Heart right ventricle (tissue), 16 donors: ENCODE measurements at regions of chr15 and their contacts with region 1.

Region 1: GRCh38 chr15:91055548-91056331 is 33.3 kb upstream of the VPS33B start:
- DNase-seq: peak; percentile 15 to 54
- ATAC-seq: peak; percentile 65 to 90 (median 75)
- H3K4me3 ChIP-seq: no peak overlapping the region
- H3K27ac ChIP-seq: no peak overlapping the region
- H3K4me1 ChIP-seq: peaks cover 0 to 6% (median 0%) of the 10 kb centered on the region in 9 donors
- H3K27me3 ChIP-seq: peaks cover 0 to 59% (median 25%) of the 10 kb centered on the region in 7 donors
- CTCF ChIP-seq: peak; percentile 53 to 88 (median 77)

Region 2: GRCh38 chr15:91022075-91022835 is 33.5 kb before region 1 on chr15 and contains the start of gene VPS33B:
- intact Hi-C with region 1: no loop called
- DNase-seq: peak; percentile 76 to 90
- ATAC-seq: peak; percentile 90 to 97 (median 94)
- H3K4me3 ChIP-seq: peak within 1 kb of the TSS; percentile 53 to 96 (median 90)
- H3K27ac ChIP-seq: peak within 1 kb of the TSS in 9 of 10 donors; percentile 46 to 90 (median 78)
- H3K4me1 ChIP-seq: peaks cover 0 to 30% (median 23%) of the 10 kb centered on the region in 9 donors
- H3K27me3 ChIP-seq: no peaks in the 10 kb centered on the region
- CTCF ChIP-seq: peak in 2 of 9 donors; percentile 2 to 15
- total RNA-seq, gene VPS33B: 3.7 to 10.4 (median 5.5) TPM

Region 3: DNA sequence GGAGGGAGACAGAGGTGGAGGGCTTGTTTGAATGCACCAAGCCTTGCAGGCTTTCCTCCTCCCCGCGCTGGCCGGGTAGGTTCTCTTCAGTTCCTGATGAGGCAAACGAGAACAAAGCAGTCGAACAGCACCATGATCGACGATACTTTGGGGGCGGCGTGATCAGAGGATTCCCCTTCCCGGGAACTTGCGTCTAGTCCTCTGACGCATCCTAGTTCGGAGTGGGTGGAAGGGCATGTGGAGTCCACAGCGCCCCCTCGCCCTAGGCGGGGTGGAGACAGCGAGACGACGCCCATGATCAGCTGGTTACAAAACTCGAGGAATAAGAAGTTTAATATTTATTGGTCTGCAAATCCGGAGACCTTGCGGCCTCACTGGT is 43.9 kb after region 1 on chr15:
- intact Hi-C with region 1: no loop called
- DNase-seq: peak in 1 of 2 donors; percentile 38
- ATAC-seq: peak in 6 of 8 donors; percentile 36 to 69 (median 50)
- H3K4me3 ChIP-seq: peak overlapping the region; percentile 22 to 70 (median 60)
- H3K27ac ChIP-seq: peak overlapping the region in 6 of 10 donors; percentile 30 to 71 (median 34)
- H3K4me1 ChIP-seq: peaks cover 3 to 51% (median 37%) of the 10 kb centered on the region in 9 donors
- H3K27me3 ChIP-seq: peaks cover 0 to 87% (median 26%) of the 10 kb centered on the region in 7 donors
- CTCF ChIP-seq: peak in 5 of 9 donors; percentile 30 to 50 (median 40)

Region 4: GRCh38 chr15:91186904-91187648 is 131.3 kb after region 1 on chr15:
- intact Hi-C with region 1: no loop called
- DNase-seq: no peak
- ATAC-seq: no peak
- H3K4me3 ChIP-seq: no peak overlapping the region
- H3K27ac ChIP-seq: no peak overlapping the region
- H3K4me1 ChIP-seq: no peaks in the 10 kb centered on the region
- H3K27me3 ChIP-seq: peaks cover 0 to 16% (median 0%) of the 10 kb centered on the region in 7 donors
- CTCF ChIP-seq: no peak

Region 5: GRCh38 chr15:91224755-91225380 is 169.1 kb after region 1 on chr15:
- intact Hi-C with region 1: loop called in 9 of 10 experiments (anchors 1 to 5 kb)
- DNase-seq: peak in 1 of 2 donors; percentile 21
- ATAC-seq: peak in 5 of 8 donors; percentile 29 to 68 (median 62)
- H3K4me3 ChIP-seq: no peak overlapping the region
- H3K27ac ChIP-seq: no peak overlapping the region
- H3K4me1 ChIP-seq: peaks cover 0 to 4% (median 0%) of the 10 kb centered on the region in 9 donors
- H3K27me3 ChIP-seq: peaks cover 0 to 3% (median 0%) of the 10 kb centered on the region in 7 donors
- CTCF ChIP-seq: peak; percentile 41 to 83 (median 72)

Region 6: GRCh38 chr15:91271565-91272153 is 215.9 kb after region 1 on chr15:
- intact Hi-C with region 1: loop called (anchors 1 to 5 kb)
- DNase-seq: peak in 1 of 2 donors; percentile 38
- ATAC-seq: peak in 7 of 8 donors; percentile 63 to 84 (median 77)
- H3K4me3 ChIP-seq: no peak overlapping the region
- H3K27ac ChIP-seq: no peak overlapping the region
- H3K4me1 ChIP-seq: peaks cover 0 to 7% (median 0%) of the 10 kb centered on the region in 9 donors
- H3K27me3 ChIP-seq: peaks cover 0 to 19% (median 0%) of the 10 kb centered on the region in 7 donors
- CTCF ChIP-seq: peak; percentile 50 to 91 (median 84)